ENCODE measurements at regions of chr9 and their contacts with region 1.

Region 1: GRCh38 chr9:134455934-134456739 is 129.9 kb downstream of the RXRA start:
- DNase-seq: peak; percentile 90 to 92 (median 91)
- ATAC-seq: peak; percentile 56 to 92 (median 83)
- H3K4me3 ChIP-seq: peak overlapping the region in 10 of 12 donors; percentile 18 to 57 (median 42)
- H3K27ac ChIP-seq: peak overlapping the region; percentile 82 to 96 (median 90)
- H3K4me1 ChIP-seq: peaks cover 3 to 38% (median 21%) of the 10 kb centered on the region in 12 donors
- H3K27me3 ChIP-seq: no peaks in the 10 kb centered on the region
- CTCF ChIP-seq: peak in 2 of 12 donors; percentile 3 to 14
- POLR2A ChIP-seq: no peak

Region 2: DNA sequence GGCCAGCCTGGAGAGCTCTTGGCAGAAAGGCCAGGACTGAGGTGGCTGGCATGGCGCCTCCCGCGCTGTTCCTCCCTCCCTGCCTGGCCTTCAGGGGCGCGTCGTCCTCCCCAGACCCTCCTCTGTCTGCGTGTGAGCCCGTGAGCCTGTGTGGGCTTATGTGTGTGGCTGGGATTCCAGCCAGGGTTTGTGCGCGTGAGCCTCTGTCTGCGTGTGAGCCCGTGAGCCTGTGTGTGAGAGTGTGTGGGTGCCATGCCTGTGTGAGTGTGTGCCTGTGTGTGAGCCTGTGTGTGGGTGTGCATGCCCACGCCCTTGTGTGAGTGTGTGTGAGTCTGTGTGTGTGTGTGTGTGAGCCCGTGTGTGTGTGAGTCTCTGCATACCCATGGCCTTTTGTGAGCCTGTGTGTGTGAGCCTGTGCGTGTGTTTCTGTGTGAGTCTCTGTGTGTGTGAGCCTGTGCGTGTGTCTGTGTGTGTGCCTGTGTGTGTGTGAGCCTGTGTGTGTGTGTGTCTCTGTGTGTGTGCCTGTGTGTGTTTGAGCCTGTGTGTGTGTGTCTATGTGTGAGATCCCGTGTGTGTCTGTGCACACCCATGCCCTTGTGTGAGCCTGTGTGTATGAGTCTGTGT is 116.8 kb before region 1 on chr9:
- intact Hi-C with region 1: no loop called
- DNase-seq: no peak
- ATAC-seq: peak in 1 of 4 donors; percentile 11
- H3K4me3 ChIP-seq: peak overlapping the region in 6 of 12 donors; percentile 0 to 28 (median 6)
- H3K27ac ChIP-seq: peak overlapping the region in 8 of 12 donors; percentile 3 to 68 (median 28)
- H3K4me1 ChIP-seq: peaks cover 51 to 100% (median 99%) of the 10 kb centered on the region in 12 donors
- H3K27me3 ChIP-seq: no peaks in the 10 kb centered on the region
- CTCF ChIP-seq: no peak
- POLR2A ChIP-seq: no peak

Region 3: DNA sequence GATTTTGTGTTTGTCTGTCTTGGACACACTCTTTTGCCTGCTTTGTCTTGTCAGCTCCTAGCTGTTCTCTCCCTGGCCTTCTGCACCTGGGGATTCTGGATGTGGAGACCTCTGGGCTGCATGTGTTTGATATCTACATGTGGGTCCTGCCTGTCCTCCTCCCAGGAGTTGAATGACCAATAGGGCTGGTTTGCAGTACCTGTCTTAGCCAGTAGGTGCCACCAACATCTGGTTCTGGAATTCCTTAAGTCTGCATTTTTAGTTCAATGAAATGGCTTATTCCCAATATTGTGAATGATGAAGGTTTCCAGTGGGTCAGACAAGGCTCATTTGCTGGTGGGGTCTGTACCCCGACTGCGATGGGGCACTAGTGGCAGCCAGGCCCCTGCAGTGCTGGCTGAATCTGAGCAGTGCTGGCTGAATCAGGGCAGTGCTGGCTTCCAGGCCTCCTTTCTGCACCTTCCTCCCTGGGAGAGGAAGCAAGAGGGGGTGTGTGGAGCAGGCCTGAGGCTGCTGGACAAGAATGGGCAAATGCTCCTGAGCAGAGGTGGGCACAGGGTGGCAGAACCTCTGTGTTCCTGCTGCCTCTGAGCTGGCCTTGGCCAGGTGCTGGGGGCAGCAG is 56.6 kb before region 1 on chr9:
- intact Hi-C with region 1: no loop called
- DNase-seq: no peak
- ATAC-seq: no peak
- H3K4me3 ChIP-seq: no peak overlapping the region
- H3K27ac ChIP-seq: no peak overlapping the region
- H3K4me1 ChIP-seq: peaks cover 32 to 94% (median 62%) of the 10 kb centered on the region in 12 donors
- H3K27me3 ChIP-seq: no peaks in the 10 kb centered on the region
- CTCF ChIP-seq: peak in 11 of 12 donors; percentile 12 to 56 (median 45)
- POLR2A ChIP-seq: no peak

Region 4: DNA sequence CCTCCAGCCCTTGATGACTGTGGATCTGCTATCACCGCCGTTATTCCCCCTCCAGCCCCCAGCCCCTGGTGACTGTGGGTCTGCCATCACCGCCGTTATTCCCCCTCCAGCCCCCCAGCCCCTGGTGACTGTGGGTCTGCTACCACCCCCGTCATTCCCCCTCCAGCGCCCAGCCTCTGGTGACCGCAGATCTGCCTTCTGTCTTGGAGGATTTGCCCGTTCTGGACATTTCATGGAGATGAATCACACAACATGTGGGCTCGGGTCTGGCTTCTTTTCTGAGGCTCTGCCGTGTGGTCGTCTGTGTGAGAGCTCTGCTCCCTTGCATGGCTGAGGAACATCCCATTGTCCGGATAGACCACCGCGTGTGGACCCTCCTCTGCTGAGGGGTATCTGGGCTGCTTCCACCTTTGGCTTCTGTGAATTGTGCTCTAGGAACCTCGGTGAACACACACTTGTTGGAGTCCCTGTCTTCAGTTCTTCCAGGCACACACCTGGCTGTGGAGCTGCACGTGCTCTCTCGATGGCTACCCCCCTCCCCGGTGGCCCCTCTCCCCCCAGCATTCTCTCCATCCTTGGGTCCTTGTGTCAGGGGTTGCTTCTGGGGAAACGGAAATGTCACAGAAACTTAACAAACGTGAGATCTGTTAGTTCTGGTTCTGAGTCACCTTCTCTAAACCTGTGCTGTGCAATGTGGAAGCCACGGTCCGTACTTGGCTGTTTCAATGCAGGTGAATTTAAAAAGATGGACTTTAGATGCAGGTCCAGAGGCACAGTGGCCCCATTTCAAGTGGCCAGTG is 80.2 kb after region 1 on chr9:
- intact Hi-C with region 1: loop called in 1 of 10 experiments (anchors 10 kb)
- DNase-seq: peak in 2 of 5 donors; percentile 4 to 42
- ATAC-seq: no peak
- H3K4me3 ChIP-seq: no peak overlapping the region
- H3K27ac ChIP-seq: no peak overlapping the region
- H3K4me1 ChIP-seq: peaks cover 0 to 18% (median 0%) of the 10 kb centered on the region in 12 donors
- H3K27me3 ChIP-seq: peaks cover 0 to 10% (median 0%) of the 10 kb centered on the region in 9 donors
- CTCF ChIP-seq: no peak
- POLR2A ChIP-seq: no peak

Region 5: GRCh38 chr9:134641173-134641985 is 185.2 kb after region 1 on chr9 and contains the start of gene COL5A1:
- intact Hi-C with region 1: loop called in 5 of 10 experiments (anchors 2 to 10 kb)
- DNase-seq: peak; percentile 91 to 94 (median 93)
- ATAC-seq: peak; percentile 81 to 92 (median 90)
- H3K4me3 ChIP-seq: peak within 1 kb of the TSS; percentile 59 to 89 (median 76)
- H3K27ac ChIP-seq: peak within 1 kb of the TSS; percentile 27 to 96 (median 82)
- H3K4me1 ChIP-seq: peaks cover 0 to 35% (median 11%) of the 10 kb centered on the region in 12 donors
- H3K27me3 ChIP-seq: peaks cover 0 to 21% (median 0%) of the 10 kb centered on the region in 9 donors
- CTCF ChIP-seq: peak in 5 of 12 donors; percentile 16 to 50 (median 35)
- POLR2A ChIP-seq: peak in 1 of 2 donors; percentile 67
- total RNA-seq, gene COL5A1: 7.6 to 91.3 (median 13.4) TPM

Region 6: DNA sequence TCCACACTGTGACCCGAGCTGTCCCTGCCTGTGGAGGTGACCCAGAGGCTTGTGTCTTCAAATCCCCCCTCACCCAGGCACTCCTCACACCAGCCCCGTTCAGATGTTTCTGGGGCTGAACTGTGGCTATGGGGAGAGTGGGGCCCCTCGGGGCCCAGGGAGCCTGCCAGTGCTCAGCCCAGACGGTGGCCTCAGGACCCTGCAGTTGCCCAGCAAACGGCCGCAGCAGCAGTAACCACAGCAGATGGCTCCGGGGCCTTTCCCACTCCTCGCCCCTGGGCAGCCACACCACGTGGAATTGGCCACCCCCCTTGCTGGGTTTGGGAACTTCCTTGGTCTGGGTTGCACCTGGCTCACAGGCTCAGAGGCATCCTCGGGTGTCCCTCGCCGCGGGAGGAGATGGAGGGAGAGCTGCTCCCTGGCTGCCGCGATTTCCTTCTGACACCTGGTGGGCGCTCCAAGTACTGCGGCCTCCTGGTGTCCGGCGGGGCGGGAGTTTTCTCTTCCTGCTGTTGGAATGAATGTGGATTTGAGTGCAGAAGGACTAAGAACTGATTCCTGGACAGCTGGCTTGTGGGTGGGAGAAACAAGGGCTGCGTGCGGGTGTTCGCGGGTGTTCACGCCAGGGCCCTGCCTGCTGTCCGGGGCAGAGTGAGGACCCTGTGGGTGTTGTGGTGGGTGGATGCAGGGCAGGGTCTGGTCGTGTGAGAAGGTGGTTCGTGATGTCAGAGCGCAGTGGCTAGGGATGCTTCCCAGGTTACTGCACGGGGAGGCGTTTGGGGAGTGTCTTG is 282.9 kb after region 1 on chr9:
- intact Hi-C with region 1: loop called in 2 of 10 experiments (anchors 2 kb)
- DNase-seq: peak; percentile 61 to 87 (median 79)
- ATAC-seq: peak; percentile 16 to 64 (median 49)
- H3K4me3 ChIP-seq: no peak overlapping the region
- H3K27ac ChIP-seq: no peak overlapping the region
- H3K4me1 ChIP-seq: peaks cover 0 to 39% (median 11%) of the 10 kb centered on the region in 12 donors
- H3K27me3 ChIP-seq: no peaks in the 10 kb centered on the region
- CTCF ChIP-seq: peak; percentile 81 to 93 (median 92)
- POLR2A ChIP-seq: no peak

Region 7: GRCh38 chr9:135410831-135411473 is 954.8 kb after region 1 on chr9:
- intact Hi-C with region 1: loop called in 1 of 10 experiments (anchors 10 kb)
- DNase-seq: peak in 1 of 5 donors; percentile 33
- ATAC-seq: no peak
- H3K4me3 ChIP-seq: no peak overlapping the region
- H3K27ac ChIP-seq: no peak overlapping the region
- H3K4me1 ChIP-seq: peaks cover 0 to 6% (median 0%) of the 10 kb centered on the region in 12 donors
- H3K27me3 ChIP-seq: peaks cover 0 to 58% (median 11%) of the 10 kb centered on the region in 9 donors
- CTCF ChIP-seq: no peak
- POLR2A ChIP-seq: no peak